Left cardiac atrium (tissue), 4 donors: ENCODE measurements at regions of chr19 and their contacts with region 1.

Region 1: GRCh38 chr19:44207126-44207803 is 5.1 kb upstream of the ZNF227 start:
- DNase-seq: peak; percentile 92
- ATAC-seq: peak; percentile 97 to 98

Region 2: GRCh38 chr19:43809762-43810696 is 397.2 kb before region 1 on chr19:
- intact Hi-C with region 1: no loop called
- DNase-seq: no peak
- ATAC-seq: peak in 1 of 2 donors; percentile 38

Region 3: DNA sequence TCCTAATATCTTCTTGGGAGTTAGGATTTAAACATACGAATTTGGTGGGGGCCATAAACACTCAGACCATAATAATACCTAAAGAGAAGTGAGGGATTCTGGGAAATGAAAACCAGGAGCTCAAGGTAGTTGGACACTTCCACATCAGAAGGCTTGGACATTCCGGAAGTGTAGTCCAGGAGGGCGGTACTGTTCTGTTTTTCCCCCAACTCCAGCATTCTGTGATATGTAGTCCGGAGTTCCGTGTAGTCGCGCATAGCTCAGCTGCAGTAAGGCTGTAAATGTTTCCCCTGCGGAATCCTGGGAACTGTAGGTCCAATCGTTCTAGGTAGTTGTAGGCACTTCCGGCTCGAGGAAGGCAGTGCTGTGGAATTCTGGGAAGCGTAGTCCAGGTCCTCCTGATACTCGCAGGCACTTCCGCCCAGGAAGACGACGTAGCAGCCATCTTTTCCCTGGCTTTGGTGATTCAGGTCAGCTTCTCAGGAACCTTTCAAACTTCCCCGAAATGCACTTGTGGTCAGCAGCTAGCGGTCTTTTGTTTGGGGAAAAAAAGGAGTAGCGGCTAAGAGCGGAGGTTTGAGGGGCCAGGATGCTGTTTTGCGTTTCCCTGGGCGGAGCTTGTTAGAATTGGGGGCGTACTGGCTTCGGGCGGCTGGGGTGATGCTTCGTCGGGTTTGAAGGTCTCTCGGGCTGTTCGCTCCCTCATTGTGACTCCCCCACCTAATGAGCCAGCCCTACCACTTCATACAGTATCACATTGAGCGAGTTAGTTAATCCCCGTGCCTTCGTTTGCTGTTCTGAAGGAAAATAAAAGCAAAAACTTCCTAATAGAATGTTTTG is 42.4 kb before region 1 on chr19 and contains the start of gene ZNF226:
- intact Hi-C with region 1: loop called in 1 of 2 experiments (anchors 2 kb)
- DNase-seq: peak; percentile 92
- ATAC-seq: peak; percentile 99 to 100
- total RNA-seq, gene ZNF226: 14.9 to 17.8 TPM